ENCODE measurements at regions of chr4 and their contacts with region 1.

Region 1: GRCh38 chr4:152640058-152640833 is 39.6 kb downstream of the TMEM154 start:
- DNase-seq: no peak
- H3K4me3 ChIP-seq: no peak overlapping the region
- H3K27ac ChIP-seq: no peak overlapping the region
- H3K4me1 ChIP-seq: peaks cover 0 to 13% (median 8%) of the 10 kb centered on the region in 4 donors
- H3K27me3 ChIP-seq: no peaks in the 10 kb centered on the region
- CTCF ChIP-seq: peak; percentile 57 to 64 (median 57)
- EP300 ChIP-seq: no peak
- POLR2A ChIP-seq: no peak

Region 2: GRCh38 chr4:152454398-152455011 is 185.7 kb before region 1 on chr4:
- intact Hi-C with region 1: loop called (anchors 5 kb)
- DNase-seq: no peak
- H3K4me3 ChIP-seq: no peak overlapping the region
- H3K27ac ChIP-seq: no peak overlapping the region
- H3K4me1 ChIP-seq: peaks cover 0 to 14% (median 5%) of the 10 kb centered on the region in 4 donors
- H3K27me3 ChIP-seq: no peaks in the 10 kb centered on the region
- CTCF ChIP-seq: peak; percentile 38 to 60 (median 42)
- EP300 ChIP-seq: no peak
- POLR2A ChIP-seq: no peak

Region 3: GRCh38 chr4:152500800-152501434 is 139.3 kb before region 1 on chr4:
- intact Hi-C with region 1: loop called (anchors 1 kb)
- DNase-seq: no peak
- H3K4me3 ChIP-seq: no peak overlapping the region
- H3K27ac ChIP-seq: no peak overlapping the region
- H3K4me1 ChIP-seq: peaks cover 0 to 6% (median 3%) of the 10 kb centered on the region in 4 donors
- H3K27me3 ChIP-seq: no peaks in the 10 kb centered on the region
- CTCF ChIP-seq: peak; percentile 69 to 76 (median 73)
- EP300 ChIP-seq: no peak
- POLR2A ChIP-seq: no peak